ENCODE measurements at regions of chr20 and their contacts with region 1.

Region 1: GRCh38 chr20:38073307-38074071 is 39.9 kb downstream of the RPRD1B start:
- DNase-seq: peak in 1 of 2 experiments; percentile 85
- H3K4me3 ChIP-seq: no peak overlapping the region
- H3K4me3 Mint-ChIP-seq: no peak overlapping the region
- H3K27ac Mint-ChIP-seq: no peak overlapping the region
- H3K4me1 ChIP-seq: peaks cover 4% of the 10 kb centered on the region; the same call in 1 of the 2 replicates
- H3K4me1 Mint-ChIP-seq: peaks cover 13% of the 10 kb centered on the region
- H3K27me3 ChIP-seq: no peaks in the 10 kb centered on the region
- H3K27me3 Mint-ChIP-seq: no peaks in the 10 kb centered on the region
- CTCF ChIP-seq: peak; percentile 95 to 98

Region 2: DNA sequence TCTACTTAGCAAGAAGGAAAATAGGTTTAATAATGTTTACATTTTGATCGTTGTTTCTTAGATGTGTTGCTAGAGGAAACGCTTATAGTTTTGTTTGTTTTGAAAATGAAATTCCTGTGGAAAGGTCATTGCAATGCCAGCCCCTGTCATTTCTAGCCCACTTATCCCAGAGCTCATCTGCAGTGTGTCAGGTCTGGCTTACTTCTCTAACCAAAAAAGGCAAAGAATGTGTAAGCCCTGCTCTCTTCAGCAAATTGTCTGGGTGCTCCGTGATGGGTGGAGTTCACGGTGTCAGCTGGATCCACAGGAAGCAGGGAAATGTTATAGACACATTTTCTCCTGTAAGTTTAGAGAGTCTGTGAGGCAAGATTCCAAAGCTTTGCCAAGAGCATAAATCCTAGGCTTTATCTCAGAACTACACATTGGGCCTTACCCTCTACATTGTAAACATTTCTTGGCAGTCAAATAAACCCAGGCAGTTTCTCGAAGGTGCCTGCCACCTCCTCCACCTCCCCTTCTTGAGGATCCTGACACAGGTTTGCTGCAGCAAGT is 11.0 kb after region 1 on chr20:
- CTCF ChIA-PET with region 1: interaction called, 24 read pairs
- POLR2A ChIA-PET with region 1: no interaction called
- intact Hi-C with region 1: no loop called
- DNase-seq: no peak
- H3K4me3 ChIP-seq: no peak overlapping the region
- H3K4me3 Mint-ChIP-seq: no peak overlapping the region
- H3K27ac Mint-ChIP-seq: no peak overlapping the region
- H3K4me1 ChIP-seq: no peaks in the 10 kb centered on the region
- H3K4me1 Mint-ChIP-seq: no peaks in the 10 kb centered on the region
- H3K27me3 ChIP-seq: no peaks in the 10 kb centered on the region
- H3K27me3 Mint-ChIP-seq: no peaks in the 10 kb centered on the region
- CTCF ChIP-seq: no peak

Region 3: DNA sequence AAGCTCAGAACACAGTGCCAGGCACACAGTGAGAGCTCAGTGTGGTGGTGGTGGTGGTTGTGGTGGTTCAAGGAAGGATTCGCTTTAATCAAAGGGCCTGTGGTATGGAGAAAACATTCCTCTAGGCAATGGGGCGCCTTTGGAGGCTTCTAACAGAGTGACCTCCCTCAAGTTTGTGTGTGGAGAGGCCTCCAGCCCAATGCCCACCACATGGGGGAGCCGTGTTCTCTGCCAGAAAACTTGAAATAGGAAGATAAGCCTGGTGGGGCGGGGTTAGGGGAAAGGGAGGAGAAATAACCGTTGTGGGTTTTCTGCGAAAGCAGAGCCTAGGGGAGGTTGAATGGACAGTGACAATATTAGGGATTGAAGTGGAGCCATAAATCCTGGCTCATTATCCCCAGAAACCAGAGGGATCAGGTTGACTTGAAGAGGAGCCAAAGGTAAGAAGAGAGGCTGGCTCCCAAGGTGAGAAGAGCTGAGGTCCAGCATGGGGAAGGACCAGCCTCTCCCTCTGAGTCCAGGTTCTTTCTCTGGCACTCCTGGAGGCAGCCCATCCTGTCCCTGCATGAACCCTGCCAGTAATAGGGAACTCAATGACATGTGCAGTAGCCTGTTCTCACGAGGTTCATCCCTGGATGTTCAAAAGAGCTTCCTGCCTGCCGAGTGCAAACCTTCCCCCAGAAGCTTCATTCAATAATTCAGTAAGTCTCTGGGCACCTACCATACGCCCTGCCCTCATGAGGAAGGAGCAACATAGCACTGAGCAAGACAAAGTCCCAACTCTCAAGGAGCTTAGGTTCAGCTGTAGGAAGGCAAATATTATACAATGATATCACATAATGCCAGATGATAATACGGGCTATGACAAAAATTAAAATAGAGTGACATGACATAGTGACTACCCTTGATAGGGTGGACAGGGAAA is 40.2 kb after region 1 on chr20:
- CTCF ChIA-PET with region 1: interaction called, 20 read pairs
- POLR2A ChIA-PET with region 1: no interaction called
- intact Hi-C with region 1: loop called (anchors 1 kb)
- DNase-seq: peak; percentile 93
- H3K4me3 ChIP-seq: no peak overlapping the region
- H3K4me3 Mint-ChIP-seq: peak overlapping the region; percentile 8
- H3K27ac Mint-ChIP-seq: peak overlapping the region; percentile 34
- H3K4me1 ChIP-seq: peaks cover 76% of the 10 kb centered on the region
- H3K4me1 Mint-ChIP-seq: peaks cover 77% of the 10 kb centered on the region
- H3K27me3 ChIP-seq: no peaks in the 10 kb centered on the region
- H3K27me3 Mint-ChIP-seq: no peaks in the 10 kb centered on the region
- CTCF ChIP-seq: peak; percentile 80 to 93

Region 4: DNA sequence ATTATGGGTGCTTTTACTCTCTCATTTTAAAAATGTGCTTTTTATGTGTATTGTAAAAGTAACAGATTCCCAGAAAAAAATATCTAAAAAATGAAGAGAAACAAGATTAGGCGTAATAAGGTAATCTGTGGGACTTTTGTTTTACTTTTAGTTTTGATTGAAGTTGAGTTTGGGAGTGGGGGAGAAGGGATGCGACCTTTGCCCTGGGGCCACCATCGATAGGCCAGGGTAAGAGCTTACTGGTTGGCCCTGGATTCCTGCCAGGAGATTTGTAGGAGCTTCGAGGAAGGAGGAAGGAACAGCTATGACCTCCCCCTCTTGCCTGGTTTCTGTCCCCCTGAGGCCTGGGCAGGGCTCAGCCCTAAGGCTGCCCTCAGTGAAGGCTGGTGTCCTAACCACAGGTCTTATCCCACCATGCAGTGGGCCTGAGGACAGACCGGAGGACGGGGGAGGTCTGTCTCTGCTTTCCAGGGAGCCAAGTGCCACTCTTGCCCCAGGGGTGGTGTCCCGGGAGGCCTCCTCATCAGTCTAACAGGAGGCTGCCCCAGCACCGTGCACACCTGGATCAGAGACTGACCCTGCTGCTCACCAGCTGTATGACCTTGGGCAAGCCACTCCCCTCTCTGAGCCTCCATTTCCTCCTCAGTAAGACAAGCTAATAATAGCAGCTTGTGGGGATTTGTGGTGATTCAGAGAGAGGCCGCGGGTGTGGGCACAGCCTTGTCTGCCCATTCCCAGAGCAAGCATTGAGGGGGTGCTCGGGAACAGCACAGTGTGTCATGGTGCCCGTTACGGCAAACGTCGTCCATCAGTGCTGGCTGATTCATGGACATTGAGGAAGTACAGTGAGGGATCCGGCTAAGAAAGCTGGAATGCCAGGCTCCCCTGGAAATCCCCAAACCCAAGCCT is 70.4 kb after region 1 on chr20:
- CTCF ChIA-PET with region 1: interaction called, 19 read pairs
- POLR2A ChIA-PET with region 1: no interaction called
- intact Hi-C with region 1: no loop called
- DNase-seq: peak; percentile 89 to 97
- H3K4me3 ChIP-seq: no peak overlapping the region
- H3K4me3 Mint-ChIP-seq: peak overlapping the region; percentile 56
- H3K27ac Mint-ChIP-seq: peak overlapping the region; percentile 96
- H3K4me1 ChIP-seq: peaks cover 66% of the 10 kb centered on the region
- H3K4me1 Mint-ChIP-seq: peaks cover 48% of the 10 kb centered on the region
- H3K27me3 ChIP-seq: no peaks in the 10 kb centered on the region
- H3K27me3 Mint-ChIP-seq: no peaks in the 10 kb centered on the region
- CTCF ChIP-seq: no peak

Region 5: DNA sequence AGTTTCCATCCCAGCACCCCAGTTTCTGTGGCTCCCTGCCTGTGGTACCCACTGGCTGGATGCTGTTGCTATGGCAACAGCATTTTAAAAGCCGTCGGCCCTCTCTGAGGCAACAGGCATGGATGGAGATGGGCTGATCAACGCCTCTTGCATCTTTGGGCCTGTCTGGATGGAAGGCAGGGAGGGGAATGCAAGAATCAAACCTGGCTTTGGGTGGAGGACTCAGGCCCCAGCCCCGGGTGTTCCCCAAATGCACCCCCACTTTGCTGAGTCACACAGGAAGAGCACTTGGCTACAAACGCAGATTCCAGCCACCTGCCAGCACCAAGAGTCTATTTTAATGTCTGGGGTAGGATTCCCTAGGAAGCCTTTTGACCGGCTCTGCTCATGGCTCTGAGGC is 137.3 kb after region 1 on chr20:
- CTCF ChIA-PET with region 1: interaction called, 11 read pairs
- POLR2A ChIA-PET with region 1: no interaction called
- intact Hi-C with region 1: no loop called
- DNase-seq: peak in 1 of 2 experiments; percentile 47
- H3K4me3 ChIP-seq: no peak overlapping the region
- H3K4me3 Mint-ChIP-seq: no peak overlapping the region
- H3K27ac Mint-ChIP-seq: no peak overlapping the region
- H3K4me1 ChIP-seq: no peaks in the 10 kb centered on the region
- H3K4me1 Mint-ChIP-seq: no peaks in the 10 kb centered on the region
- H3K27me3 ChIP-seq: no peaks in the 10 kb centered on the region
- H3K27me3 Mint-ChIP-seq: peaks cover 4% of the 10 kb centered on the region
- CTCF ChIP-seq: no peak

Region 6: DNA sequence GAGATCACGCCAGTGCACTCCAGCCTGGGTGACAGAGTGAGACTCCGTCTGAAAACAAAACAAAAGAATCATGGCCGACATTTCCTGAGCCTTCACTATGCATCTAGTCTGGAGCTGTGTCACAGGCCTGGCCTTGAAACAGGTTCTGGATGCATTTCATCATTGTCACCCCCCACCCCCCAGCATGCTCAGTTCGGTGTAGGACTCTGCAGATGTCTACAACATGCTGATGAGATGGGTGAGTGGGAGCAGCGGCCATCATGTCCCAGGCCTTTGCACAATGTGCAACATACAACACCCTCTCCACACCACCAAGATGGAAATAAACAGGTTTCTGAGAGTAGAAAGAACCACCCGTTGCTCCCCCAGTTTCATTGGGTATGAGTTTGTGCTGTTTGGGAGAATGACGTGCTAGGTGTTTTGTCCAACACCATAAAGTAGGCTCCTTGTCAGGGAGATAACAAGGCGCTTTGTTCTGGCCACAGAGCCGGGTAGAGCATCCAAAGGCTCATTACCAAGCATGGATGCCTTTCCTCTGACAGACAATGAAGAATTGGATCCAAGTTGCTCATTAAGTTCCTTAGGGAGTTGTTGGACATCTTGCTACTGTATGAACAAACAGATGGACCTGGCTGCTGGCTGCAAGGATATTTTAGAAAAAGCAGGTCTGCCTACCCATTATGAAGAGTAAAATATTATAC is 339.5 kb after region 1 on chr20:
- CTCF ChIA-PET with region 1: interaction called, 11 read pairs
- POLR2A ChIA-PET with region 1: no interaction called
- intact Hi-C with region 1: loop called (anchors 1 kb)
- DNase-seq: peak in 1 of 2 experiments; percentile 34
- H3K4me3 ChIP-seq: no peak overlapping the region
- H3K4me3 Mint-ChIP-seq: no peak overlapping the region
- H3K27ac Mint-ChIP-seq: no peak overlapping the region
- H3K4me1 ChIP-seq: peaks cover 7% of the 10 kb centered on the region; the same call in 1 of the 2 replicates
- H3K4me1 Mint-ChIP-seq: peaks cover 9% of the 10 kb centered on the region
- H3K27me3 ChIP-seq: no peaks in the 10 kb centered on the region
- H3K27me3 Mint-ChIP-seq: no peaks in the 10 kb centered on the region
- CTCF ChIP-seq: no peak

Measured in Caco-2 (cell line).